Aorta (tissue), 5 donors: ENCODE measurements at regions of chr1 and their contacts with region 1.

Region 1: DNA sequence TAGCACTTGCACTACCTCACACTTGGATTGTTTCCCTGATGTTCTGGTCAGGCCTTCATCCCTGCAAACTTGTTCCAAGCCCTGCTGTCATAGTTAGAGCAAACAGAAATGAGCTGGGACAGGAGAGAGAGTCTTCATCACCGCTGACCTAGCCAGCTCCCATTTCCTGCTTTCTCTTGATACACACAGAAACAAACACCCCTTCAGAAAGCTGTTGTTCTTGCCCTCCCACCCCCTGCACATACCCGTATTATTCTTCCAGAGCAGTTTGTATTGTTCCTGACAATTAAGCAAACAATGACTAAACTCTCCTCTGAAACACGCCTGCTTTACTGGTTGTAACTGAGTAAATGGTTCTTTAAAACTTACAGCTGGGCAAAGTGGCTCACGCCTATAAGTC is 2.9 kb upstream of the SYT2 start:
- DNase-seq: no peak
- ATAC-seq: no peak
- H3K4me3 ChIP-seq: no peak overlapping the region
- H3K27ac ChIP-seq: no peak overlapping the region
- H3K4me1 ChIP-seq: no peaks in the 10 kb centered on the region
- H3K27me3 ChIP-seq: no peaks in the 10 kb centered on the region

Region 2: GRCh38 chr1:202184750-202185460 is 528.2 kb before region 1 on chr1:
- intact Hi-C with region 1: loop called (anchors 5 kb)
- DNase-seq: peak; percentile 89 to 95
- ATAC-seq: peak; percentile 71
- H3K4me3 ChIP-seq: no peak overlapping the region
- H3K27ac ChIP-seq: no peak overlapping the region
- H3K4me1 ChIP-seq: no peaks in the 10 kb centered on the region
- H3K27me3 ChIP-seq: no peaks in the 10 kb centered on the region

Region 3: GRCh38 chr1:202348509-202349205 is 364.5 kb before region 1 on chr1 and contains the start of gene PPP1R12B:
- intact Hi-C with region 1: loop called (anchors 2 to 5 kb)
- DNase-seq: peak; percentile 98
- ATAC-seq: peak; percentile 99
- H3K4me3 ChIP-seq: peak within 1 kb of the TSS; percentile 80 to 81
- H3K27ac ChIP-seq: peak within 1 kb of the TSS in 1 of 2 donors; percentile 75
- H3K4me1 ChIP-seq: peaks cover 0 to 7% of the 10 kb centered on the region in 2 donors
- H3K27me3 ChIP-seq: no peaks in the 10 kb centered on the region
- total RNA-seq, gene PPP1R12B: 595 to 1,102 TPM

Region 4: DNA sequence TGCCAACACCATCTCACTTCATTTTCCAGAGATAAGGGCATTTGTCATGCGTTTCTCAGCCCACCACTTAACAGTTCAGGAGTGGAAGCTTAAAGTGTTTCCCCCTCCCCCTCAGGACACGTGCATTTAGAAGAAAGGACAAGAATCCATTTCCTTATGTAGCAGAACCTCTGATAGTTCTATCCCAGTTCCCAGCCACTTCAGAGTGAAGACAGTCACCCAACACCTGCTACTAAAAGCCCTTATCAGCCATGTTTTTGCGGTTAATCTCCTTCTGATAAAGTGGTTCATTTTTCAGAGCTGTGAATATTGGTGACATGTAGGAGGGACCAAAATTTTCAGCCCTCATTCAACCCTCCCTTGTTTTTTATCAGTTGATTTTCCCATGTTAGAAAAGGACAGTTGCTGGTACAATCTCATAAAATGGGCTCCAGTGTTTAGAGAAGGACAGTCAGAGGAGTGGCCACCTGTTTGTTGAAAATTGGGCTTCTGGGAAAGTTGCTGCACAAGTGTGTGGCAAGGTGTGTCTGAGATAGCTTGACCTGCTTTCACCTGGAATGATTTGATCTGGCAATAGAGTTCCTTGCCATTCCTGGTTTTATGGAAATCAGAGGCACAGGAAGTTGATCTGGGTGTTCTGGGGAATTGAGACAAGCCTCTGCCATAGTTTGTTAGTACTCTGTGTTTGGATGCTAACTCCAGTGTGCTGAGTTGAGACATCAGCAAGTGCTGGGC is 250.6 kb before region 1 on chr1:
- intact Hi-C with region 1: loop called (anchors 5 kb)
- DNase-seq: no peak
- ATAC-seq: no peak
- H3K4me3 ChIP-seq: no peak overlapping the region
- H3K27ac ChIP-seq: no peak overlapping the region
- H3K4me1 ChIP-seq: peaks cover 0 to 2% of the 10 kb centered on the region in 2 donors
- H3K27me3 ChIP-seq: no peaks in the 10 kb centered on the region

Region 5: DNA sequence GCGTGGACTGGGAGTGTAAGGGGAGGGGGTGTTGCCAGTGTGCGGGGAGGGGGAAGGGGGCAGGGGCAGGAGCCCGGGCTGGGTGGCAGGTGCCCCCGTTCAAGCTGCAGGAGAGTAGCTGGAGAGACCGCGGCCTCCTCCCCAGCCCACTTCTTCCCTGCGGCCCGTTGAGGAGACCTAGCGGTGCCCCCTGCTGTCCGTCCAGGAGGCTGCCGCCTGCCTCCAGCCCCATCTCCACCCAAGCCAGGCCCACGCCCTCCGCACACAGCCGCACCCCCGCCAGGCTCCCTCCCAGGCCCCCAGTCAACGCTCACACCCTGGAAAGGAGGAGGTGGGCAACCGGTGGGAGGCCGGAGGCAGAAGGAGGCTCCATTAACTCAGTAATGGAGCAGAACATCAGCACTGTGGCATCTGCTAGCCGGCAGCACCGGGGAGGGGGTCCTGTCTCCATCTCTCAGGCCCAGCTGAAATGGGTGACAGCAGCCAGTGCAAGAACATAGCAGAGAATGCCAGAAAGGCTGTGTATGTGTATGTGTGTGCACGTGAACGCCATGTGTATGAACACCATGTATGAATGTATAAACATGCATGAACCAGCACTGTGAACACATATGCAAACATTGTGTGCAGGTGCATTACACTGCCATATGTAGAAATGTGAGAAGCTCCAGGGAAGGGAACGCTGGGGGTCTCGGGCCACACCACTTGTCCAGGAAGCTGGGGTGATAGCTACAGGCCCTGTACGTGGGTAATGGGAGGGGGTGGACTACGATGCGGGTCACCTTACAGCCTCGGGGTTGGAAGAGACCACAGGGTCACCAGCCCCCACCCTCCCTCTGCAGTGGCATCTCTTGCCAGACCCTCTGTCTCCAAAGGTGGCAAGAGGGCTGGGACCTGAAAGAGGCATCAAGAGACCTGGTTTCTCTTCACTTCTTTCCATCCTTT is 87.4 kb before region 1 on chr1:
- intact Hi-C with region 1: loop called in 1 of 2 experiments (anchors 5 kb)
- DNase-seq: peak; percentile 81 to 93
- ATAC-seq: peak; percentile 86
- H3K4me3 ChIP-seq: no peak overlapping the region
- H3K27ac ChIP-seq: no peak overlapping the region
- H3K4me1 ChIP-seq: no peaks in the 10 kb centered on the region
- H3K27me3 ChIP-seq: no peaks in the 10 kb centered on the region

Region 6: GRCh38 chr1:202880961-202881460 is 167.9 kb after region 1 on chr1:
- intact Hi-C with region 1: no loop called
- DNase-seq: no peak
- ATAC-seq: no peak
- H3K4me3 ChIP-seq: no peak overlapping the region
- H3K27ac ChIP-seq: no peak overlapping the region
- H3K4me1 ChIP-seq: no peaks in the 10 kb centered on the region
- H3K27me3 ChIP-seq: no peaks in the 10 kb centered on the region

Region 7: GRCh38 chr1:203101915-203102634 is 389.0 kb after region 1 on chr1:
- intact Hi-C with region 1: no loop called
- DNase-seq: no peak
- ATAC-seq: no peak
- H3K4me3 ChIP-seq: no peak overlapping the region
- H3K27ac ChIP-seq: no peak overlapping the region
- H3K4me1 ChIP-seq: no peaks in the 10 kb centered on the region
- H3K27me3 ChIP-seq: no peaks in the 10 kb centered on the region